Caco-2 (cell line): ENCODE measurements at regions of chr7 and their contacts with region 1.

Region 1: GRCh38 chr7:92763636-92764423 is 72.5 kb downstream of the CDK6 start:
- DNase-seq: peak; percentile 82 to 83
- H3K4me3 ChIP-seq: no peak overlapping the region
- H3K4me3 Mint-ChIP-seq: no peak overlapping the region
- H3K27ac Mint-ChIP-seq: peak overlapping the region; percentile 51
- H3K4me1 ChIP-seq: peaks cover 62% of the 10 kb centered on the region
- H3K4me1 Mint-ChIP-seq: peaks cover 41% of the 10 kb centered on the region
- H3K27me3 ChIP-seq: no peaks in the 10 kb centered on the region
- H3K27me3 Mint-ChIP-seq: no peaks in the 10 kb centered on the region
- CTCF ChIP-seq: no peak

Region 2: GRCh38 chr7:92740700-92741126 is 23.1 kb before region 1 on chr7:
- CTCF ChIA-PET with region 1: no interaction called
- POLR2A ChIA-PET with region 1: interaction called, 3 read pairs
- intact Hi-C with region 1: loop called (anchors 1 kb)
- DNase-seq: peak; percentile 73
- H3K4me3 ChIP-seq: no peak overlapping the region
- H3K4me3 Mint-ChIP-seq: peak overlapping the region; percentile 55
- H3K27ac Mint-ChIP-seq: peak overlapping the region; percentile 48
- H3K4me1 ChIP-seq: peaks cover 51% of the 10 kb centered on the region
- H3K4me1 Mint-ChIP-seq: peaks cover 59% of the 10 kb centered on the region
- H3K27me3 ChIP-seq: no peaks in the 10 kb centered on the region
- H3K27me3 Mint-ChIP-seq: no peaks in the 10 kb centered on the region
- CTCF ChIP-seq: no peak

Region 3: DNA sequence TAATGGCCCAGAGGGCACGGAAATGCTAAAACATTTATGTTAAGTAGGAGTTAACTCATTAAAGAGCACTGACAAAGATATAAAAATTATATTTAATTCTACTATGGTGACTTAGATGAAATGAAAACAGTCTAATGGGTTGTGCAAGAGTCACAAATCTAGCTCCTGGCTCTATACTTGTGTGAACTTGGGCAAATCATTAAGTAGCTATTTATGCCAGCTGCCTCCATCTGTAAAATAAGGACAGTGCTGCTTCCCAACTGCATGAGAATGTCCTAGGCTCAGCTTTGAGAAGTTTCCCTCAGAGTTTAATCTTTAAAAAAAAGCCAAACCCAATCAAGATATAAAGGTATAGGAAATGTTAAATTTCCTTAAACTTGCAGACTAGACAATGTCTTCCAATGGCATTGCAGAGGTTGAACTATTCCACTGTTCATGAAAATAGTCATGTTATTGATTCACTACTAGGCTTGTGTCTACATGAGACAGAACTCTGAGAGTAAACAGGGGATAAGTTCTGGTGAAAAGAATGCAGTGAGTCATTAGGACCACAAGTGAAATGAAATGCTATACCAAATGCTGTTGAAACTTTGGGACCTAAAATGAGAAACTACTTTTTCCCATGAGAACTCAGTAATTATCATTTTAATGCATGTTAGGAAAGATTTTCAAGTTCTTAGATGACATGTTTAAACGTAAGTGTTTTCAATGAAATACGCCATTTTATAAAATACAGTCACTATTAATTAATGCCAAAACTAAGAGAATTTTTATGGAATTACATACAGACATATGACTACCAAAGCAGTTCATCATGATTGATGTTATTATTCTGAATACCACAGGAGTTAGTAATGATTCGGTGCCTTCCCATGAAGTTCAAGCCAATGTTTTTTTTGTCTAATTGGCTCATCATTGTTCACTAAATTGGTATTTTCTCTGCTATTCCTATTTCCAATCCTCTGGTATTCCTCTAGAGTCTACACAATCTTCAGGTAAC is 11.6 kb before region 1 on chr7:
- CTCF ChIA-PET with region 1: no interaction called
- POLR2A ChIA-PET with region 1: no interaction called
- intact Hi-C with region 1: loop called (anchors 1 kb)
- DNase-seq: peak in 1 of 2 experiments; percentile 24
- H3K4me3 ChIP-seq: no peak overlapping the region
- H3K4me3 Mint-ChIP-seq: no peak overlapping the region
- H3K27ac Mint-ChIP-seq: no peak overlapping the region
- H3K4me1 ChIP-seq: peaks cover 43% of the 10 kb centered on the region
- H3K4me1 Mint-ChIP-seq: peaks cover 21% of the 10 kb centered on the region
- H3K27me3 ChIP-seq: no peaks in the 10 kb centered on the region
- H3K27me3 Mint-ChIP-seq: no peaks in the 10 kb centered on the region
- CTCF ChIP-seq: no peak